Spleen (tissue), 13 donors: ENCODE measurements at regions of chr14 and their contacts with region 1.

Region 1: DNA sequence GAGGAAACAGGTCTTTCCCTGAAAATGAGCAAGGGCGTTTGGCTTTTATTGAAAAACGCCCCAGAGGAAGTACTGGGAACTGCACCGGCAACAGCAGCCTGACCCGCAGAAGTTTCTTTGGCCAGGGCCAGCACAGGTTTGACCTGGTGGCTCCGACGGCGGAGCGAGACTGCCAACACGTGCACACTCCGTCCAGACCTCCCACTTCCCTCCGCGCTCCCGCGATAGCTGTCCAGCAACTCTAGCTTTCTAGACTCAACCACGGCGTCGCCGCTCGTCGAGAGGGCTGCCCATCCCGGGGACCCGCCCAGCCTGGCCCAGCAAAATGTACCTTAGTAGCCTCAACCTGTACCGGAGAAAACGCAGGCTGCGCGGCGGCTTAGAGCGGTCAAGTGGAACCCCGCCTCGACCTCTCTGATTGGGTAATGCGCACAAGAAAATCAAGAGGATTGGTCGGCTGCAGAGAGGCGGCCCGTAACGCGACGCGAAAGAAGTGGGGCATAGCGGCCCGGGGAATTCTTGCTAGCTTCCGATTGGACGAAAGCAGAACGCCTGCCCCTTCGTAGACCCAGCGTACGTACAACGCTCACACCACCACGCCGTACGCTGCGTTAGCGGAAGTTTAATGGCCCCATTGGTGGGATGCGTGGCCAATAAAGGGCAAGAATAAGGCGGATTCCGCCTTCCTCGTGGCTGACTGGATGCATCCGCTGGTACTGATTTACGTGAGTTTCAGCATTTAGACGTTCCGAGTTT is at the start of gene WDR89:
- DNase-seq: peak; percentile 97
- H3K4me3 ChIP-seq: peak within 1 kb of the TSS; percentile 12 to 84 (median 66)
- H3K27ac ChIP-seq: peak within 1 kb of the TSS; percentile 82 to 98 (median 98)
- H3K4me1 ChIP-seq: peaks cover 0 to 64% (median 33%) of the 10 kb centered on the region in 6 donors
- H3K27me3 ChIP-seq: no peaks in the 10 kb centered on the region
- CTCF ChIP-seq: peak; percentile 66 to 92 (median 84)
- POLR2A ChIP-seq: peak in 2 of 3 donors; percentile 27 to 40
- total RNA-seq, gene WDR89: 13.4 to 18.9 (median 18.4) TPM

Region 2: DNA sequence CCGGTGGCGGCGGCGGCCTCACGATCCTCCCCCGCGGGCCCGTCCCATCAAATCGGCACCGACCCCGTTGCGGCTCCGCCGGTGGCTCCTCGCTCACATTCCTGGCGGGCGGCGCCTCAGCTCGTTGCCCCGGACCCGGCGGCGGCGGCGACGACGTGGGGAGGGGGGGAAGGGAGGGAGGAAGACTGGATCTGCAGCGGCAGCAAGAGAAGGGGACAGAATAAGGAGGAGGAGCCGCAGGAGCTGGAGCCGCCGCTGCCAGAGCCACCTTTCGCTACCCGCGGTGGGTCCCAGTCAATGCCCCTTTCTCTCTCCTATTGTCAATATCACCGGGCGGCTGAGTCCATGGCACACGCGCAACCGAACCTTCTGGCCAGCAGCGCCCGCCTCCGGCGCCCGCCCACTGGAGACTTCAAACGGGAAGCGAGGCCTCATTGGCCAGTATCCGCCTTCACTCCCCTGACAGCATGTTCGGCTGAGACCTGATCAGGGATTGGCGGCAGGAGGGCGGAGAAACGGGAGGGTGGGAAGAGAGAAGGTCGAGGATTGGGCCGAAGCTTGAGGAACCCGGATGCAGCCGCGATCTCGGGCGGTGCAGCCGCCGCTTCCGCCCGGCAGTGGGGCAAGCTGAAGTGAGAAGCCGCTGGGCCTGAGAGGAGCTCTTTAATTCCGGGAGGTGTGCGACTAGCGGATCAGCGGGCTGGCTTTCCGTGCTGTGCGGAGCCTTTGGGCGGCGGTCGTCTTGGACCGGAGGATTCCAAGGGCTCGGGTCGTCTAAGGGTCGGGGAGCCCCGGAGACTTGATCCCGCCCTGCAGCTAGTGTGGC is 98.4 kb before region 1 on chr14 and contains the start of gene PPP2R5E:
- intact Hi-C with region 1: loop called (anchors 5 kb)
- DNase-seq: peak; percentile 98
- H3K4me3 ChIP-seq: peak within 1 kb of the TSS; percentile 85 to 98 (median 91)
- H3K27ac ChIP-seq: peak within 1 kb of the TSS; percentile 88 to 95 (median 90)
- H3K4me1 ChIP-seq: peaks cover 7 to 42% (median 30%) of the 10 kb centered on the region in 6 donors
- H3K27me3 ChIP-seq: no peaks in the 10 kb centered on the region
- CTCF ChIP-seq: peak in 4 of 11 experiments; percentile 2 to 50 (median 48)
- POLR2A ChIP-seq: peak in 2 of 3 donors; percentile 63 to 82
- total RNA-seq, gene PPP2R5E: 27.2 to 42.3 (median 38.5) TPM